A673 (cell line): ENCODE measurements at regions of chr1 and their contacts with region 1.

Region 1: DNA sequence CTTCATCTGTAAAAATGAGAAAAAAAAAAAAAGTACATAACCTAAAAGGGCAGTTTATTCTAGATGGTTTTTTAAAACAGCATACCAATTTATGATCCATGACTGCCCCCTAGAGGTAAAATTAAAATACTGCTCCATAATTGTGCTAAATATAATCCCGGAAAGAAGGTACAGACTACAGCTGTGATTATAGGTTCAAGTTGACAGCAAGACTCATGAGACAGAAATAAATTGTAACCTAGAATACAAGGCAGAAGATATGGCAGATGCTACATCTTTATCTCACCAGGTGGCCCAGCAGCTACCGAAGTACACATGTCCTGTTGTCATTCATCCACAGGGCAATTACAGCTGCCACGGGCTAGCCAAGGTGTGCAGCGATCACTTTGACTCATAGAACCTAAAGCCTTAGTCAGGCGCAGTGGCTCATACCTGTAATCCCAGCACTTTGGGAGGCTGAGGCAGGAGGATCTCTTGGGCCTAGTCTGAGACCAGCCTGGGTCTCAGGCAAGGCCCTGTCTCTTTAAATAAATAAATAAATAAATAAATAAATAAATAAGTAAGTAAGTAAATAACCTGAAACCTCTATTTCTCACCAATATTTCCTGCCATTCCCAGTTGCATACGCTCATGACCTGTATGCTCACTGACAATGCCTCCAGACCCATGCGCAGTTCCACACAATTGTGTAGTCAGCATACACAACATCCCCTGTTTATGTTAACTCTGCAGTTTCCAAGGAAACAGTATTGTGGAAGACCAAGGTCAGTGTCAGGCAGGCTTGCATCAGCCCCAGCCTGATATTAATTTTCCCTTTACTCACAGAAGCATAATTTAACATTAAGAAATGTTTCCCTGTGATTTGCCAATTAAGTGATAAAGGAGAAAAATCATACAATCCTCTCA is 18.3 kb upstream of the PPIE start:
- DNase-seq: peak; percentile 81
- H3K4me3 ChIP-seq: no peak overlapping the region
- H3K27ac ChIP-seq: no peak overlapping the region
- H3K4me1 ChIP-seq: no peaks in the 10 kb centered on the region
- H3K27me3 ChIP-seq: peaks cover 20% of the 10 kb centered on the region
- CTCF ChIP-seq: peak; percentile 79

Region 2: DNA sequence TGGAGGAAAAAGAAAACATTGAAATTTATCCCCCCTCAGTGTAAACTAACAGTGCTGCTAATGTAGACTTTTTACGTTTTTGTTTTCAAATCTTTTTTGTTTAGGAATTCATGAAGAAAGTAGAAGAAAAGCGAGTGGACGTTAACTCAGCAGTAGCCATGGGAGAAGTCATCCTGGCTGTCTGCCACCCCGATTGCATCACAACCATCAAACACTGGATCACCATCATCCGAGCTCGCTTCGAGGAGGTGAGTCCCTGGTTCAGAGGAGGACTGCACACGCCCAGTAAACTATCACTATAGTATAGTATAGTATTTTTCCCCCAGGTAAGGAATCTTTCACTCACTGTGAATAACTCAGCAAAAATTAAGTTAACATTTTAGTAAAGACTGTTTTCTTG is 266.7 kb before region 1 on chr1:
- CTCF ChIA-PET with region 1: no interaction called
- POLR2A ChIA-PET with region 1: no interaction called
- intact Hi-C with region 1: no loop called
- DNase-seq: no peak
- H3K4me3 ChIP-seq: no peak overlapping the region
- H3K27ac ChIP-seq: no peak overlapping the region
- H3K4me1 ChIP-seq: no peaks in the 10 kb centered on the region
- H3K27me3 ChIP-seq: no peaks in the 10 kb centered on the region
- CTCF ChIP-seq: no peak

Region 3: DNA sequence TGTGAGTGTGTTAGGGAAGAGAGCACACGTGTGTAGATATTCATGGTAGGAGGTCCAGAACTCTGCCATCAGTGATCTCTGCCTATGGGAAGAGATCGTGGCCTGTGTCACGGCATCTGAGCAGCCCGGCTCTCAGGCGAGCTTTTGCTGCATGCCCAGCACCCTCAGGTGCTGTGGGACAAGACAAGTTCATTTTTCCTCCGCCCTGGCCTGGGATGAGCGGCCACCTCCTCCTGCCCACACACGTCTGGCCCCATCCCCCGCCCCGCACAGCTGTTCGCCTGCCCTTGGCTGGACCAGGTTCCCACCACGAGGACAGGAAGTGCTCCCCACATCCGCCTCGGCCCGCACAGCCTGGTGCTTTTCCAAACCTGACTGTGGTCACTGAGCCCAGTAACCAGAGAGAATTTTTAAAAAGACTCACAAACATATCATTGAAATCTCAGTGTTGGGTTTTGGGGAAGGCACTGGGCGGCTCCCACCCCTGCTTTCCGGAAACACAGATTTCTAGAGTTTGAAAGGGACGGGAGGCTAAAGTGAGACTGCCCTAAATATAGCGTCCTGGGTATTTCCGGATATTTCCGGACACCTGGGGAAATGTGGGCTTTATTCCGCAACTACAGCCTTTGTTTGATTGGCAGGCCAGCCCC is 210.9 kb before region 1 on chr1:
- CTCF ChIA-PET with region 1: no interaction called
- POLR2A ChIA-PET with region 1: no interaction called
- intact Hi-C with region 1: loop called (anchors 5 kb)
- DNase-seq: no peak
- H3K4me3 ChIP-seq: no peak overlapping the region
- H3K27ac ChIP-seq: no peak overlapping the region
- H3K4me1 ChIP-seq: no peaks in the 10 kb centered on the region
- H3K27me3 ChIP-seq: peaks cover under 1% of the 10 kb centered on the region
- CTCF ChIP-seq: no peak